CD14-positive monocyte (primary cell): ENCODE measurements at regions of chr14 and their contacts with region 1.

Region 1: GRCh38 chr14:90903101-90903500 is 86.9 kb upstream of the TTC7B start:
- DNase-seq: peak; percentile 36 to 52 (median 45)
- H3K4me3 ChIP-seq: no peak overlapping the region
- H3K4me3 Mint-ChIP-seq: no peak overlapping the region
- H3K27ac ChIP-seq: no peak overlapping the region
- H3K27ac Mint-ChIP-seq: no peak overlapping the region
- H3K4me1 ChIP-seq: no peaks in the 10 kb centered on the region
- H3K4me1 Mint-ChIP-seq: no peaks in the 10 kb centered on the region
- H3K27me3 ChIP-seq: no peaks in the 10 kb centered on the region
- H3K27me3 Mint-ChIP-seq: peaks cover 0 to 2% (median 0%) of the 10 kb centered on the region in 3 donors
- CTCF ChIP-seq: peak; percentile 87

Region 2: DNA sequence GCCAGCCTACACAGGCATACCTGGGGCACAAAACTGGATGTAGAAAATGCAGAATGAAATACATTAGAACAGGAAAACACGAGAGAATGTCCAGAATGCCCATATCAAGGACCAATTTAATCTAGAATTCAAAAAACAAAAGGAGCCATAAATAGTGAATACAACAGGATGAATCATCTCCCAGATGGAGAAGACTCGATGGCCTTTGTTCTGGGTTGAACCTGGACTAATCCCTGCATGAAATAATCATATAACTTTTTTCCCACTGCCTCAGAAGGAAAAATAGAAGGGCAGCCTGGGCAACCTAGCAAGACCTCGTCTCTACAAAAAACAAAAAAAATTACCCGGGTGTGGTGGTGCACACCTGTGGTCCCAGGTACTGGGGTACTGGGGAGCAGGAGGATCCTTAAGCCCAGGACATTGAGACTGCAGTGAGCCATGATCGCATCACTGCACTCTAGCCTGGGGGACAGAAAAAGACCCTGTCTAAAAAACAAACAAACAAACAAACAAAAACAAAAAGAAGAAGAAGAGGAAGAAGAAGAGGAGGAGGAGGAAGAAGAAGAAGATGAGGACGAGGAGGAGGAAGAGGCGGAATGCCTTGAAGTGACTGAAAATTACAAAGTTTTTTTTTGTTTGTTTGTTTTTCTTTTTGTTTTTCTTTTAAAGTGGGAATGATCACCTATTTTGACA is 541.1 kb before region 1 on chr14:
- intact Hi-C with region 1: no loop called
- DNase-seq: no peak
- H3K4me3 ChIP-seq: no peak overlapping the region
- H3K4me3 Mint-ChIP-seq: no peak overlapping the region
- H3K27ac ChIP-seq: no peak overlapping the region
- H3K27ac Mint-ChIP-seq: no peak overlapping the region
- H3K4me1 ChIP-seq: no peaks in the 10 kb centered on the region
- H3K4me1 Mint-ChIP-seq: no peaks in the 10 kb centered on the region
- H3K27me3 ChIP-seq: no peaks in the 10 kb centered on the region
- H3K27me3 Mint-ChIP-seq: peaks cover 12 to 13% (median 12%) of the 10 kb centered on the region in 3 donors
- CTCF ChIP-seq: no peak

Region 3: DNA sequence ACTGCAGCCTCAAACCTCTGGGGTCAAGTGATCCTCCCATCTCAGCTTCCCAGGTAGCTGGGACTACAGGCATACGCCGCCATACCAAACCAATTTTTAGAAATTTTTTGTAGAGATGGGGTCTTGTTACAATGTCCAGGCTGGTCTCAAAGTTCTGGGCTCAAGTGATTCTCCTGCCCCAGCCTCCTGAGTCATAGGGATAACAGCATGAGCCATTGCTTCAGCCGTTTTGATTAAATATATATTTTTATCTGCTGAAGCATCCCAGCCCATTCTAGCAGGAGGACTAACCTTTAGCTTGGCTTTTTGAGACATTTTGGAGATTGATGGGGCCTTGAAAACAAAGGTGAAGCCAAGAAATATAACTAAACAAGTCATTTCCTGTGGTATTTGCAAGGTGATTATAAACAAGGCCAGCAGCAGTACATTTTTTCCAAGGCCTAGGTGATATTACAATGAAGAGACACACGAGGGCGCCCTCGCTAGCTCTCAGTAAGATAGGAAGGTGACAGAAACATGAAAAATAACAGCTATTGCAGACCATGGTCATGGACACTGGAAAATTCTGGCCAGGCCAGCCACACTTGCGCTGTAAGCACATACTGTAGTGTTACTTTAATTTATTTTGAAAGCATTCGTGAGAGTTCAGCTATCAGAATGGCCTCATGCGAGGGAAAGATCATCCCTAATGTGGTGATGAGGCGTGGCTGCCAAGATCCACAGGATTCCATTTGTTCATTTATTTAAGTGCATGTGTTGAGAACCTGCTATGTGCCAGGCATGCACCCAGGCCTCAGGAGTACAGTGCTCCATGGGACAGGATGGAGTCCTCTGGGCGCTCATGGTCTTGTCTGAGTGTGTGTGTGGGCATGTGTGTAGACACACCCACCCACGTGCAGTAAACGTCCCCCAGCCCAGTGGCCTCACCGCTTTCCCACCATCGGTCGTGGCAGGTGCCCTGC is 274.3 kb after region 1 on chr14:
- intact Hi-C with region 1: loop called (anchors 2 kb)
- DNase-seq: peak; percentile 12 to 52 (median 39)
- H3K4me3 ChIP-seq: no peak overlapping the region
- H3K4me3 Mint-ChIP-seq: no peak overlapping the region
- H3K27ac ChIP-seq: no peak overlapping the region
- H3K27ac Mint-ChIP-seq: peak overlapping the region in 2 of 7 donors; percentile 62 to 76
- H3K4me1 ChIP-seq: no peaks in the 10 kb centered on the region
- H3K4me1 Mint-ChIP-seq: no peaks in the 10 kb centered on the region
- H3K27me3 ChIP-seq: no peaks in the 10 kb centered on the region
- H3K27me3 Mint-ChIP-seq: no peaks in the 10 kb centered on the region
- CTCF ChIP-seq: peak; percentile 82